Esophagus squamous epithelium (tissue), 5 donors: ENCODE measurements at regions of chr11 and their contacts with region 1.

Region 1: GRCh38 chr11:12029738-12030363 is 21.4 kb upstream of the DKK3 start:
- DNase-seq: no peak
- H3K4me3 ChIP-seq: no peak overlapping the region
- H3K27ac ChIP-seq: no peak overlapping the region
- H3K4me1 ChIP-seq: no peaks in the 10 kb centered on the region
- H3K27me3 ChIP-seq: no peaks in the 10 kb centered on the region
- CTCF ChIP-seq: no peak
- POLR2A ChIP-seq: no peak

Region 2: GRCh38 chr11:11931461-11932055 is 98.3 kb before region 1 on chr11:
- intact Hi-C with region 1: loop called (anchors 10 kb)
- DNase-seq: no peak
- H3K4me3 ChIP-seq: no peak overlapping the region
- H3K27ac ChIP-seq: no peak overlapping the region
- H3K4me1 ChIP-seq: no peaks in the 10 kb centered on the region
- H3K27me3 ChIP-seq: no peaks in the 10 kb centered on the region
- CTCF ChIP-seq: peak in 5 of 6 experiments; percentile 52 to 68 (median 60)
- POLR2A ChIP-seq: no peak